ENCODE measurements at regions of chr2 and their contacts with region 1.

Region 1: DNA sequence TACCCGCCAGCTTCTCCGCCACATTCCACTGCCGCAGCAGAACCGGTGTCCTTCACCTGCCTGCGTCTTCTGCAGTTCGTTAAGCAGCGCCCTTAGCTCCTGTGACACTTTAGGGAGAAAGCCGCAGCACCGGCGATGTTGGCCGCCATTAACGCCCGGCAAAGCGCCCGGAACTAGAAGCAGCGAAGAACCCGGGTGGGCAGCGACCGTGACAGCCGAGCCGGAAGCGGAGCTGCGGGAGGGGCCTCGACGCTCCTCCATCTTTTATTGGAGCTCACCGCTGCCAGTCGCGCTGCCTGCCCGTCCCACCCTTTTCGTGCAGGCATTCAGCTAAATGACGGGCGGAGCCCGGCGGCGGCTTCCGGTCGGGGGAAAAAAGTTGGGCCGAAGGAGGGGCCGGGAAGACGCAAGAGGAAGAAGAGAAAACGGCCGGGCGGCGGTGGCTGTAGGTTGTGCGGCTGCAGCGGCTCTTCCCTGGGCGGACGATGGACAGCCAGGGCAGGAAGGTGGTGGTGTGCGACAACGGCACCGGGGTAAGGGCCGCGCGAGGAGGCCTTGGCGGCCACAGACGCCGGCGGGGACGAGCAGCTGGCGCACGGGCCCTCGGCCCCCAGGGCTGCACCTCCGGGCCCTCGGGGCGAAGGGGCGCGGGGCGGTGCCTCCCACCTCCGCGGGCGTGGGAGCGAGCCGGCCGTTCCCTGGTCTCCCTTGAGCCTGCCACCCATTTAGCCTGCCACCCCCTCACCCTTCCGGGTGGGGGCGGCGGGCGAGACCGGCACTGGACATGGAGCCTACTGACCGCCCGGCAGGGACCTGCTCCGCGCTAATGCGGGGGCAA is at the start of gene ACTR2:
- DNase-seq: peak; percentile 93 to 97
- H3K4me3 ChIP-seq: peak within 1 kb of the TSS; percentile 80
- H3K27ac ChIP-seq: peak within 1 kb of the TSS; percentile 88
- H3K4me1 ChIP-seq: peaks cover 49% of the 10 kb centered on the region
- H3K27me3 ChIP-seq: no peaks in the 10 kb centered on the region
- CTCF ChIP-seq: no peak
- total RNA-seq, gene ACTR2: 170 and 246 TPM in 2 replicates

Region 2: GRCh38 chr2:65129826-65130663 is 97.6 kb before region 1 on chr2 and contains the start of gene RAB1A:
- CTCF ChIA-PET with region 1: interaction called, 15 read pairs
- POLR2A ChIA-PET with region 1: interaction called, 36 read pairs
- intact Hi-C with region 1: loop called (anchors 1 kb)
- DNase-seq: peak; percentile 97 to 99
- H3K4me3 ChIP-seq: peak within 1 kb of the TSS; percentile 75
- H3K27ac ChIP-seq: peak within 1 kb of the TSS; percentile 87
- H3K4me1 ChIP-seq: peaks cover 33% of the 10 kb centered on the region
- H3K27me3 ChIP-seq: no peaks in the 10 kb centered on the region
- CTCF ChIP-seq: peak; percentile 52; the same call in 1 of the 2 replicates
- total RNA-seq, gene RAB1A: 110 and 165 TPM in 2 replicates

Region 3: DNA sequence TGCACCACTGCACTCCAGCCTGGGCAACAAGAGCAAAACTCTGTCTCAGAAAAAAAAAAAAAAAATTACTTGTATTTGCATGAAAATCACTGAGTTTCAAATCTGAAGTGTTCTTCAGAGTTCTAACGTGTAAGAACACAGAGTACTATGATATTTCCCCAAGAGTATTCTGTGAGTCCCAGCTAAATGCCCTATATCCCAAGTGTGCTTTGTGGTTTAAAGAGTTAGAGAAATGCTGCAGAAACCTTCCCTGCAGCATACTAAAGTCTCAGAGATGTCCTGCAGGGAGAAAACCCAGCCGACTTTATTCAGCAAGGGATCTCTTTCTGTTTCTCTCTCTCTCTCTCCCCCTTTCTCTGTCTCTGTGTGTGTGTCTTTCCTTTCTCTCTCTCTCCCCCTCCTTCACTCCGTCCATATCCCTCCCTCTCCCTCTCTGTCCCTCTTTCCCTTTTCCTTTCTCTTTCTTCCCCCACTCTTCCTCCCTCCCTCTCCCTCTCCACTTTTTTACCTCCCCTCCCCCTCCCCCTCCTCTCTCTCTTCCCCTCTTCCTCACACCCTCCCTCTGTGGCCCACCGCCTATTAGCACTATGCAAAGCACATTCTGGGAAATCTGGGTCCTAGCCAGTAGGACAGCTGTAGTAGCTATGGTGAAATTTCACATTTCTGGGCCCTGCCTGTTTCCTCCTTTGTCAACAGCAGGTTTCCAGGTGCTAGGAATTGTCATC is 54.1 kb after region 1 on chr2:
- CTCF ChIA-PET with region 1: no interaction called
- POLR2A ChIA-PET with region 1: interaction called, 20 read pairs
- intact Hi-C with region 1: no loop called
- DNase-seq: no peak
- H3K4me3 ChIP-seq: no peak overlapping the region
- H3K27ac ChIP-seq: no peak overlapping the region
- H3K4me1 ChIP-seq: no peaks in the 10 kb centered on the region
- H3K27me3 ChIP-seq: no peaks in the 10 kb centered on the region
- CTCF ChIP-seq: no peak

Region 4: DNA sequence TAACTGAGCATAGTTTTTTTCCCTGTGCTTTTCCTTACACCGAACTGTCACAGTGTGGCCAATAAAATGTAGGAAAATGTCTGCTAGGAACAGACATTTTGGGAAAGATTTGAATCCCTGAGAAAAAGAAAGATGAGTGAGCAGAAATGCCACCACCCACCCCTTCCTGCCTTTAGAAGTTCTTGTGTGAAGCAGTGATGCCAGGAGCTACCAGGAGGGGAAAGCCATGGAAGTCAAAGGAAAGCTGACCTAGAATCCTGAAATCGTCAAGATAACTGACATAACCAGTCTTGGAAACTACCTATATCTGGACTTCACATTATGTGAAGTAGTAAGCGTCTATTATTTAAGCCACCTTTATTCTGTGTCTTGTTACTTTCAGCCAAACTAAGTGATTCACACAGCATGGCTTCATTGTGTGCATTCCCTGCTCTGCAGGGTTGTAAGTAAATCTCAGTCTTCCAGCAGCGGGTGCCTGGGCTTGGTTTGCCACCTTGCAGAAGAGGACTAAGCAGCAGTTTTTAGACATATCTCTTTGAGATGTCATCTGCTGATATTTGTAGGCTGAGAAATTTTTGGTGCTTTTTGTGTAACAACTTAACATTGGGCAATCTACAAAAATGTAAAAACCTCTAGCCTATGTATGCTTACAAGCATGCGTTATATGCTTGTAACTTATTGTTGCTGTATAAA is 216.0 kb after region 1 on chr2:
- CTCF ChIA-PET with region 1: interaction called, 14 read pairs
- POLR2A ChIA-PET with region 1: no interaction called
- intact Hi-C with region 1: no loop called
- DNase-seq: no peak
- H3K4me3 ChIP-seq: no peak overlapping the region
- H3K27ac ChIP-seq: no peak overlapping the region
- H3K4me1 ChIP-seq: peaks cover 8% of the 10 kb centered on the region
- H3K27me3 ChIP-seq: no peaks in the 10 kb centered on the region
- CTCF ChIP-seq: no peak

Region 5: DNA sequence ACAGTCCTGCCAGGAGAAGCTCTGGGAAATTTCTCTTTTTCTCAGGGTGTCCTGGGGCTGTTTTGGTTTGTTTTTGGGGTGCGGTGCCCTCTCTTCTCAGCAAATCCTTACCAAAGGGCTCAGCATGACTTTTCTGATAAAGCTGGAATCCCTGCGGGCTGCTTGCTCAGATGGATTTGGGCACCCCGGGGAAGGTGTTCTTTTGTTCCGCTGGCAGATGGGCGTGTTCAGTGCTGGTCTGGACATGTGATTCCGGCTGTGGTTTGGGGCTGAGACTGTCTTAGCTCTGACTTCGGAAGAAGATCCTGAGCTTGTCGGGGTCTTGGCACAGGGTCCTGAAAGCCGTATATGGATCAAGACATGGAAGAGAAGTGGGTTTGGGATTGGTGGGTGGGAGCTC is 339.0 kb after region 1 on chr2:
- CTCF ChIA-PET with region 1: no interaction called
- POLR2A ChIA-PET with region 1: interaction called, 31 read pairs
- intact Hi-C with region 1: no loop called
- DNase-seq: peak; percentile 21 to 54
- H3K4me3 ChIP-seq: peak overlapping the region; percentile 24; the same call in 1 of the 2 replicates
- H3K27ac ChIP-seq: 0 out of 2 replicates have a peak overlapping the region, but pooled peaks have one; percentile 31
- H3K4me1 ChIP-seq: peaks cover 10% of the 10 kb centered on the region; the same call in 1 of the 2 replicates
- H3K27me3 ChIP-seq: no peaks in the 10 kb centered on the region
- CTCF ChIP-seq: no peak

Region 6: GRCh38 chr2:66561645-66562303 is 1334.1 kb after region 1 on chr2:
- CTCF ChIA-PET with region 1: no interaction called
- POLR2A ChIA-PET with region 1: interaction called, 18 read pairs
- intact Hi-C with region 1: no loop called
- DNase-seq: no peak
- H3K4me3 ChIP-seq: no peak overlapping the region
- H3K27ac ChIP-seq: no peak overlapping the region
- H3K4me1 ChIP-seq: 0 out of 2 replicates have a peak, but pooled peaks cover 8% of the 10 kb centered on the region
- H3K27me3 ChIP-seq: no peaks in the 10 kb centered on the region
- CTCF ChIP-seq: no peak

Measured in PC-9 (cell line).